ENCODE measurements at regions of chr14 and their contacts with region 1.

Region 1: GRCh38 chr14:90642244-90642717 is 173.9 kb downstream of the TTC7B start:
- DNase-seq: no peak
- ATAC-seq: no peak
- H3K4me3 ChIP-seq: no peak overlapping the region
- H3K4me3 Mint-ChIP-seq: no peak overlapping the region
- H3K27ac ChIP-seq: no peak overlapping the region
- H3K27ac Mint-ChIP-seq: no peak overlapping the region
- H3K4me1 ChIP-seq: no peaks in the 10 kb centered on the region
- H3K4me1 Mint-ChIP-seq: no peaks in the 10 kb centered on the region
- H3K27me3 ChIP-seq: no peaks in the 10 kb centered on the region
- H3K27me3 Mint-ChIP-seq: no peaks in the 10 kb centered on the region
- CTCF ChIP-seq: no peak

Region 2: DNA sequence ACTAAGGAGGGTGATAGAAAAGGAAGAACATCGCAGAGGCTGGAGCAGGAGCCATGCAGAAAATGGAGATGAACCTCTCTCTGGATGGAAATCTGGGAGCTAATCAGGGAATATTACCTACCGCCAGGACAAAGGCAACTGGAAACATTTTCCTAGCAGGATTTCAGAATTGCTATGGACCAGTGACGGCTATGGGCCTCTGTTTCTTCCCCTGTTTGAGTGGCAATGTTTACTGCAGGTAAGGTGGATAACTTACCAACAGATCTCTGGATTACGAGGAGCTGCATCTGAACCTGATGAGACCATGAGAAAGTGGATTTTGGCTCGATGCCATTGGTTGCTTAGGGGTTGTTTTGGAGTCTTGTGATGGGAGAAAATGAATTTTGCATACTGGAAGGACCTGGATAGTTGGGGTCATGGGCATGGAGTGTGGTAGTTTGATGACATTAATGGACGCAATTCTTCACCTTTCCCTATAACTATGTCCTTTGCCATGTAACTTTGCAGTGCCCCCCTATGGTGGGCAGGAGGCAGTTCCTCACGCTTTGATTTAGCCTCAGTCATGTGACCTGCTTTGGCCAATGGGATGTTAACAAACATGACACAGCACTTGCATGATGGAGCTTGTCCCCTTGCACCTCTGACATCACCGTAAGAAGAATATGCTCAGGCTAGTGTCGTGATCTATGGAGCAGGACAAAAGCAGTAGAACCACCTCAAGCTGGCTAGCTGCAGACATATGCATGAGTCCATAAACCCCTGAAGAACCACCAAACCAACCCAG is 194.4 kb before region 1 on chr14:
- CTCF ChIA-PET with region 1: no interaction called
- POLR2A ChIA-PET with region 1: no interaction called
- intact Hi-C with region 1: loop called in 1 of 2 experiments (anchors 2 kb)
- DNase-seq: no peak
- ATAC-seq: no peak
- H3K4me3 ChIP-seq: no peak overlapping the region
- H3K4me3 Mint-ChIP-seq: no peak overlapping the region
- H3K27ac ChIP-seq: no peak overlapping the region
- H3K27ac Mint-ChIP-seq: no peak overlapping the region
- H3K4me1 ChIP-seq: no peaks in the 10 kb centered on the region
- H3K4me1 Mint-ChIP-seq: no peaks in the 10 kb centered on the region
- H3K27me3 ChIP-seq: no peaks in the 10 kb centered on the region
- H3K27me3 Mint-ChIP-seq: no peaks in the 10 kb centered on the region
- CTCF ChIP-seq: no peak

Region 3: DNA sequence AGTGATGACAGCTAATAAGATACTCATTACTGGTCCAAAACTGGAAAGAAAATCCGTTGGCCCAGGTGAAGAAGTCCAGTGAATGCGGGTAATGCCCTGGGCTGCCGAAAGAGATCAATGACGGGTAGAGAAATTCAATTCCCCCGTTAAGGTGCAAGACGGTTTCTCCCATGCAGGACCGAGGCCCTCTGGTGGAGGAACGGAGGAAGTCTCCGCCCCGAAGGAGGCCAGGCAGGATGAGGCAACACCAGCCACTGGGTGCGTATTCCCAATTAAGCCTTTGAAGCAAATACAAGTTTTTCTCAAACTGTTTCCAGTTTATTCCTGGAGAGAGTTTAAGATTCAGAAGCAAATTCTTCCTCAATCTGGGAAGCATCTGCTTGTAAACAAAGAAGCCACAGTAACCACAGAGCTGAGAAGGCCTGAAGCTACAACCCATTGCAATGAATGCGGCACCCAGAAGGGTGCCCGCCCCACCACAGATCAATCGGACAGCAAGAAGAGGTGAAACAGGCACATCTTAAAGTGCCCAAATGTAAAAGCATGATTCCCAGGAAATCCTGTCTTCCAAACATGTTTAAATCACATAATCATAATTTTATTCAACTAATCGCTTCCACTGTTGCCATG is 55.4 kb after region 1 on chr14:
- CTCF ChIA-PET with region 1: no interaction called
- POLR2A ChIA-PET with region 1: no interaction called
- intact Hi-C with region 1: no loop called
- DNase-seq: peak; percentile 55 to 85 (median 73)
- ATAC-seq: peak; percentile 90
- H3K4me3 ChIP-seq: no peak overlapping the region
- H3K4me3 Mint-ChIP-seq: no peak overlapping the region
- H3K27ac ChIP-seq: no peak overlapping the region
- H3K27ac Mint-ChIP-seq: no peak overlapping the region
- H3K4me1 ChIP-seq: no peaks in the 10 kb centered on the region
- H3K4me1 Mint-ChIP-seq: no peaks in the 10 kb centered on the region
- H3K27me3 ChIP-seq: no peaks in the 10 kb centered on the region
- H3K27me3 Mint-ChIP-seq: no peaks in the 10 kb centered on the region
- CTCF ChIP-seq: peak; percentile 88

Region 4: DNA sequence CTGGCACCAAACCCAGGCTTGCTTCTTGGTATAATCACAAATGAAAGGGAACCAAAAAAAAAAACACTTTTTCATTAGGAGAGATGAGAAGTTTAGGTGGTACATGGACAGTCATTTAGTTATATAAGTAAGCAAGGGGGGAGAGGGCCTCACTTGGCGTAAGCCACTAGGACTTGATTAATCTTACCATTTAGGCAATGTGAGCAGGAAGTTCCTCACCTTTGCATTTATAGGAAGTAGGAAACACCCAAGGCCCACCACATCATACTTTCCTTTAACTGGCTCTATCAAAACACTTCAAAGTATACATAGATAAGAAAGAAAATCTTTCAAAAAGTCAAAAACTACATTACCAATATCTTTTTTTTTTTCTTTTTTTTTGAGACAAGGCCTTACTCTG is 424.9 kb after region 1 on chr14:
- CTCF ChIA-PET with region 1: no interaction called
- POLR2A ChIA-PET with region 1: no interaction called
- intact Hi-C with region 1: no loop called
- DNase-seq: peak in 3 of 9 experiments; percentile 11 to 70 (median 44)
- ATAC-seq: peak; percentile 58
- H3K4me3 ChIP-seq: no peak overlapping the region
- H3K4me3 Mint-ChIP-seq: peak overlapping the region; percentile 55
- H3K27ac ChIP-seq: peak overlapping the region; percentile 44 to 59
- H3K27ac Mint-ChIP-seq: peak overlapping the region; percentile 89
- H3K4me1 ChIP-seq: peaks cover 62% of the 10 kb centered on the region
- H3K4me1 Mint-ChIP-seq: peaks cover 67% of the 10 kb centered on the region
- H3K27me3 ChIP-seq: no peaks in the 10 kb centered on the region
- H3K27me3 Mint-ChIP-seq: no peaks in the 10 kb centered on the region
- CTCF ChIP-seq: no peak